GM13977 (cell line): ENCODE measurements at regions of chr15 and their contacts with region 1.

Region 1: GRCh38 chr15:38440353-38441129 is 13.4 kb upstream of the FAM98B start:
- DNase-seq: peak; percentile 37
- CTCF ChIP-seq: peak; percentile 87

Region 2: DNA sequence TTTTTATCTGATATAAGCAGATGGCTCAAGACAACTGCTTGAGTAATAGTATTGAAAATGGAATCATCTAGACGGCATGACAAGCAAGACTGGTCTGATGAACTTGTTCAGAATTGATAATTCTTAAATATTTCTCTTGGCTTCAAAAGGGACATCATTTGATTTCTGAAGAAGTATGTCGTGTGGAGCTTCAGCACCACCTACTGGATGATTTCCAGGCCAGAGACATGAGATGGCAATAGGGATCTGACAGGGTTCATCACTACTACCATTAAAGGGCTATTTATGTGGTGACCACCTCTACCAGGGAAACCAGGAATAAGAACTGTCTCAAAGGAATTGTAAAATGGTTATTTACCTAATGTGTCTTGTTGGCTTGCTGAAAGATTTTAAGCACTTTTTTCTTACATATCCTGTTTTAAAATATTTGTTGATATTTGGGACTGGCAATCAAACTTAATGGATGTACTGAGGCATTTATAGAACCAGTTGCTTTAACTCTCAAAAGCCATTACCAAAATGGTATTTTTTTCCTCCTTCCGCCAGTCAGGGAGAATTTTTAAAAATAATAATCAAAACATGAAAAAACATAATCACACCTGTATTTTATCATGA is 86.1 kb before region 1 on chr15:
- in situ Hi-C with region 1: no loop called
- DNase-seq: peak; percentile 27
- CTCF ChIP-seq: peak; percentile 84

Region 3: DNA sequence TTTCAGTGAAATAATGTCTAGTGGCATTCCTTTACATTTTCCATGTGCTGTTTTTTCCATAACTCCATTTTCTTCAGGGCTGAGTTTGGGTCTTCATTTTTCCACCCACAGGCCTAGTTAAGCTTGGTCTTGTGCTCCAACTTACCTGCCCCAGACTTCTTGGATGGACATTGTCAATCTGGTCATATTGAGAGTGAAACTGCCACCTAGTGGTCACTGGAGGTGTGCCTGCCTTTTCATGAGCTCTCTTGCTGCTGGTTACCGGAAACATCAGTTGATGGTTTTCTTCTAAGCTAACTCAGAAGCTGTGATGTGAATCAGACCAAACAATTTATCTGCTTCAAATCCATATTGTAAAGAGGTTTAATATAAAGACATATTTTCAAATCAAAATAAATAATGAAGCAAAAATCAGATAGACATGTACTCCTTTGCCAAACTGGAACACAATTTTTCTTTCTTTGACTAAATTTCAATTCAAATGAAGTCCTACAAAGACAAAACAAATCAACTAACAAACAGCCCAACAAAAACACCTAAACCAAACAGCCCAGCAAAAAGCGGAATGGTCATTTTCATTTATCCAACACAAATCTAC is 259.2 kb after region 1 on chr15:
- in situ Hi-C with region 1: loop called (anchors 10 kb)
- DNase-seq: peak; percentile 51
- CTCF ChIP-seq: peak; percentile 86